Sciatic nerve (tissue), 2 donors: ENCODE measurements at regions of chr19 and their contacts with region 1.

Region 1: GRCh38 chr19:16429066-16429758 is 42.6 kb downstream of the EPS15L1 start:
- DNase-seq: no peak
- ATAC-seq: peak; percentile 20

Region 2: DNA sequence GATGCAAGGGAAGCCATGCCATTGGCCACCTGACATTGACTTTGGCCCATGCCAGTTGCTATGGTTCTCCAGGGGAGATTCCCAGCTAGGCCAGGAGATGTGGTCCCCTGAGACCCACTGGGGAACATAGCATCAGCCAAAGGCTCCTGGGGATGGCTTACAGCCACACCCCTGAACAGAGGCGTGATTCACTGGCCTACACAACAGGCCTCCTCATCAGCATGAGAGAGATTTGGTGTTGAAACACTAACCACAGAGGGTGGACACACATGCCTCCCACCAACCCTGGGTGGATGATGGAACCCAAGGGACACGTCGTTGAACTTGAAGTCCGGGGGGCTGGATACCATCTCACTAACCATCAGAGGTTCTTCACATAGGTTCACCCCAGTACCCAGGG is 1830.7 kb after region 1 on chr19:
- intact Hi-C with region 1: loop called (anchors 10 kb)
- DNase-seq: no peak
- ATAC-seq: no peak